ENCODE measurements at regions of chr6 and their contacts with region 1.

Region 1: GRCh38 chr6:148776321-148777308 is 29.8 kb downstream of the UST start:
- DNase-seq: no peak
- H3K4me3 ChIP-seq: no peak overlapping the region
- CTCF ChIP-seq: no peak

Region 2: GRCh38 chr6:148765898-148766808 is 10.5 kb before region 1 on chr6:
- CTCF ChIA-PET with region 1: interaction called, 10 read pairs
- POLR2A ChIA-PET with region 1: no interaction called
- DNase-seq: no peak
- H3K4me3 ChIP-seq: no peak overlapping the region
- CTCF ChIP-seq: no peak